ENCODE measurements at regions of chr19 and their contacts with region 1.

Region 1: DNA sequence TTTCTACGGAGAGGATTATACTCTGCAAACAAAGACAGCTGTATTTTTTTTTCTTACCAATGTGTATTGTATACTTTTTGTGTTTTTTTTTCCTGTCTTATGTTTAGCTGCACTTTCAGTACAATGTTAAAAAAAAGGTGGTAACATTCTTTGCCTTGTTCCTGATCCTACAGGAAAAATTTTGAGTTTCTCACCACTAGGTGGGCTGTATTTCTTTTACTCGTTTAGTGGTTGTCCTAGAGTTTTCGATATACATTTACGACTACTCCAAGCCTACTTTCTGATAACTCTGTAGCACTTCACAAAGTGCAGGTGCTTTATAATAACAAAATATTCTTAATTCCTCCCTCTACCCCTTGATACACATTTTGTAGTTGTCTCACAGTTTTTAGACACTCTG is 652.2 kb downstream of the UQCRFS1 start:
- DNase-seq: no peak
- H3K4me3 ChIP-seq: no peak overlapping the region
- H3K27ac ChIP-seq: no peak overlapping the region
- H3K4me1 ChIP-seq: no peaks in the 10 kb centered on the region; a peak in 1 of 7 replicates
- H3K27me3 ChIP-seq: no peaks in the 10 kb centered on the region
- CTCF ChIP-seq: peak in 1 of 3 experiments; percentile 33; a peak in 1 of 4 replicates
- EP300 ChIP-seq: no peak
- POLR2A ChIP-seq: no peak
- RAD21 ChIP-seq: peak in 1 of 2 experiments; percentile 20; a peak in 1 of 4 replicates

Region 2: GRCh38 chr19:28542394-28543243 is 18.2 kb before region 1 on chr19:
- CTCF ChIA-PET with region 1: interaction called, 14 read pairs
- POLR2A ChIA-PET with region 1: no interaction called
- DNase-seq: no peak
- H3K4me3 ChIP-seq: no peak overlapping the region
- H3K27ac ChIP-seq: no peak overlapping the region
- H3K4me1 ChIP-seq: no peaks in the 10 kb centered on the region
- H3K27me3 ChIP-seq: no peaks in the 10 kb centered on the region
- CTCF ChIP-seq: no peak
- EP300 ChIP-seq: no peak
- POLR2A ChIP-seq: no peak
- RAD21 ChIP-seq: no peak

Region 3: GRCh38 chr19:28612275-28612769 is 51.5 kb after region 1 on chr19:
- CTCF ChIA-PET with region 1: no interaction called
- POLR2A ChIA-PET with region 1: no interaction called
- DNase-seq: no peak
- H3K4me3 ChIP-seq: no peak overlapping the region
- H3K27ac ChIP-seq: no peak overlapping the region
- H3K4me1 ChIP-seq: no peaks in the 10 kb centered on the region
- H3K27me3 ChIP-seq: no peaks in the 10 kb centered on the region
- CTCF ChIP-seq: peak; percentile 32 to 39 (median 34); a peak in 3 of 4 replicates
- EP300 ChIP-seq: no peak
- POLR2A ChIP-seq: no peak
- RAD21 ChIP-seq: peak in 1 of 2 experiments; percentile 39; a peak in 1 of 4 replicates

Measured in H1 (cell line).